Testis (tissue), 5 donors: ENCODE measurements at regions of chr19 and their contacts with region 1.

Region 1: DNA sequence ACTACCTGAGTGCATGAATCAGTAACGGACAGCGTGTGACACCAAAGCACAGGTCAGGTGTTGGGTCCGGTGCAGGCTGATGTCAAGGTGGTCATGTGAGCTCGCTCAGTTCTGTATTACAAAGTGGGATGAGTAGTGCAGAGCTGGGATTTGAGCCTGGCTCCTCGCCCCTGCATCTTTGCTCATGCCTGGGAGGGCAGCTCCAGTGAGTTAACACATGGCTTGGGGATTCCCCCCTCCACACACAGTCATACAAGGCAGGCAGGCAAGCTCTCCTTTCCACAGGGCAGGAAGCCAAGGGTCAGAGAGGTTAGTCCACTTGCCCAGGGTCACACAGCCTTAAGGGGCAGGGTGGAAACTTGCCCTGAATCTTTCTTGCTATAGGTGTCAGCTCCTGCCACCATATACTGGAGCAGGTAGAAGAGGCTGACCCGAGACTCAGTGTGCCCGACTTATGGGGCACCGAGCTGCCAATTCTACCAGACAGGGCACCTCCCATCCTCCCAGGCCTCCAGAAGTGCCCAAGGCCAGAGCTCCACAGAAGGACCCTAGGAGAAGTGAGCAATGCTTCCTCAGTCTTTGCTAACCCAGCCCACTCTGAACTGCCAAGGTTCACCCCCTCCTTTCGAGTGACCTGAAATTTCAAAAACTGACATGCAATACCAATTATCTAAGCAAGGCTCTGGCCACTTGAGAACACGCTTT is 35.4 kb downstream of the ZNF787 start:
- DNase-seq: no peak
- H3K4me3 ChIP-seq: no peak overlapping the region
- H3K27ac ChIP-seq: no peak overlapping the region
- H3K4me1 ChIP-seq: peaks cover 5% of the 10 kb centered on the region
- H3K27me3 ChIP-seq: no peaks in the 10 kb centered on the region
- CTCF ChIP-seq: no peak
- POLR2A ChIP-seq: no peak

Region 2: DNA sequence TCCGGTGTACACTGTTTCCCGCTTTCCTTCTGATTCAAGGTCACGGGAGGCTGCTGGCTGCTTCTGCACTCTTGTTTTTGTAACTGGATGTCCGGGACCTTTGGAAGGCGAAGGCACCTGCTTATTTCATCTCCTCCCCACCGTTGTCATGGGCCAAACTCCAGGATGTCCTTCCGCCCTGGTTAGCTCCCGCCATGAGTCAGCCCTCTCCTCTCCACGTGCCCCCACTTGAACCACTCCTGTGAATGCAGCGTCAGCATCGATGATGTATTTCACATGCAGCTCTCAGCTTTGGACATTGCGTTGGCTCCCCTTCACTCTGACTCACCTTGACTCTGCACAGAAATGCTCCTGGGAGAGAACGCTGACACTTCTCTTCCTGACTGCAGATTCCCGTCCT is 84.5 kb after region 1 on chr19:
- intact Hi-C with region 1: loop called (anchors 5 kb)
- DNase-seq: no peak
- H3K4me3 ChIP-seq: no peak overlapping the region
- H3K27ac ChIP-seq: no peak overlapping the region
- H3K4me1 ChIP-seq: no peaks in the 10 kb centered on the region
- H3K27me3 ChIP-seq: no peaks in the 10 kb centered on the region
- CTCF ChIP-seq: no peak
- POLR2A ChIP-seq: no peak